Aorta (tissue), 5 donors: ENCODE measurements at regions of chr6 and their contacts with region 1.

Region 1: GRCh38 chr6:132483779-132484679 is 28.9 kb downstream of the STX7 start:
- DNase-seq: no peak
- ATAC-seq: peak; percentile 89
- H3K4me3 ChIP-seq: no peak overlapping the region
- H3K27ac ChIP-seq: no peak overlapping the region
- H3K4me1 ChIP-seq: no peaks in the 10 kb centered on the region
- H3K27me3 ChIP-seq: no peaks in the 10 kb centered on the region

Region 2: GRCh38 chr6:131909408-131910218 is 574.4 kb before region 1 on chr6:
- intact Hi-C with region 1: loop called in 1 of 2 experiments (anchors 10 kb)
- DNase-seq: peak; percentile 71 to 77
- ATAC-seq: peak; percentile 79
- H3K4me3 ChIP-seq: no peak overlapping the region
- H3K27ac ChIP-seq: no peak overlapping the region
- H3K4me1 ChIP-seq: no peaks in the 10 kb centered on the region
- H3K27me3 ChIP-seq: no peaks in the 10 kb centered on the region

Region 3: GRCh38 chr6:132279592-132280139 is 204.4 kb before region 1 on chr6:
- intact Hi-C with region 1: loop called (anchors 5 kb)
- DNase-seq: peak; percentile 80 to 92
- ATAC-seq: peak; percentile 88
- H3K4me3 ChIP-seq: peak overlapping the region; percentile 67 to 97
- H3K27ac ChIP-seq: no peak overlapping the region
- H3K4me1 ChIP-seq: no peaks in the 10 kb centered on the region
- H3K27me3 ChIP-seq: no peaks in the 10 kb centered on the region

Region 4: DNA sequence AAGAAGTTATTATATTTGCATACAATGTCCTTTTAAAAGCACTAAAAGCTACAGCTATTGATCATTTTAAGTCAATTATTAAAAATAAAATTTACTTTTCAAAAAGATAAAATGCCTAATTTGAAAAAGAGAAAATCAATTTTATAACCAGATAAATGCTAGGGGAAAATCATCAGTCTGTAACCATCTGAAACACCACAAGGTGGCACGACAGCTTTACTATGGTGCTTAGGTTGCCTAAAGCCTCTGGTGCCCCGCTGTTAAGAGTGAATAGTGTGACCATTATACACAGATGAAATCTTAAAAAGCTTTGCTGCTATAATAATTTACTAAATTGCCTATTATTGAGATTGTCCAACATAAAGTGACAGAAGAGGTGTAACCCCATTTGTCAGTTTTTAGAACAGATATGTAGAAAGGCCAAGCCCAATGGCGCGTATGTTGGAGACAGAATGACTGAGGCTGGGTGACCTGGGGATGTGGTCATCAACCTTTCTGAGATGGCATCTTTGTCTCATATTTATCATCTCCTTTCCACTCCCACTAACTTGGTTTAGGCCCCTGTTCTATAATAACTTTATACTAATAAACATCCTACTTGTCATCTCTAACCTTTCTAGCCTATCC is 183.6 kb before region 1 on chr6:
- intact Hi-C with region 1: loop called (anchors 2 to 5 kb)
- DNase-seq: no peak
- ATAC-seq: no peak
- H3K4me3 ChIP-seq: no peak overlapping the region
- H3K27ac ChIP-seq: no peak overlapping the region
- H3K4me1 ChIP-seq: no peaks in the 10 kb centered on the region
- H3K27me3 ChIP-seq: peaks cover 0 to 1% of the 10 kb centered on the region in 2 donors

Region 5: GRCh38 chr6:132424827-132425575 is 59.0 kb before region 1 on chr6:
- intact Hi-C with region 1: no loop called
- DNase-seq: no peak
- ATAC-seq: no peak
- H3K4me3 ChIP-seq: no peak overlapping the region
- H3K27ac ChIP-seq: no peak overlapping the region
- H3K4me1 ChIP-seq: no peaks in the 10 kb centered on the region
- H3K27me3 ChIP-seq: no peaks in the 10 kb centered on the region